ENCODE measurements at regions of chr3 and their contacts with region 1.

Region 1: GRCh38 chr3:136196401-136197158 is 445 bp upstream of the MSL2 start:
- DNase-seq: peak; percentile 100
- ATAC-seq: peak; percentile 79
- H3K4me3 ChIP-seq: peak overlapping the region; percentile 97
- H3K27ac ChIP-seq: peak overlapping the region; percentile 81
- H3K4me1 ChIP-seq: peaks cover 3% of the 10 kb centered on the region; the same call in 1 of the 2 replicates
- H3K27me3 ChIP-seq: no peaks in the 10 kb centered on the region
- CTCF ChIP-seq: no peak
- POLR2A ChIP-seq: peak; percentile 88
- RAD21 ChIP-seq: peak; percentile 9; the same call in 1 of the 2 replicates

Region 2: DNA sequence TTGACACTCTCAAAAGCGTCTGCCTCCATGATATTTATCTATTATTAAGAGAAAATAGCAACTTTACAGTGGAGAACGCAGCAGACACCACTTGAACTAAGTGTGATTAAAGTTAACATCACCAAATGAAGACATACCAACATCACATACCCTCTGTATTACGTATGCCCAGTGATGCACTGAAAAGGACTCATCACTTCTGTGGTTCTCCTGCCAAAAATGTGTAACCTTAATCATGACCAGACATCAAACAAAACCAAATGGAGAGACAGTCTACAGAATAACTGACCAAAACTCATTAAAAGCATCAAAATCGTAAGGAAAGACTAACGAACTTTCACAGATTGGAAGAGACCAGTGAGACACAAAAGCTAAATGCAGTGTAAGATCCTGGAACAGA is 127.9 kb before region 1 on chr3:
- CTCF ChIA-PET with region 1: no interaction called
- POLR2A ChIA-PET with region 1: no interaction called
- dilution Hi-C with region 1: no loop called
- in situ Hi-C with region 1: no loop called
- intact Hi-C with region 1: no loop called
- DNase-seq: peak; percentile 88
- ATAC-seq: peak; percentile 36
- H3K4me3 ChIP-seq: no peak overlapping the region
- H3K27ac ChIP-seq: no peak overlapping the region
- H3K4me1 ChIP-seq: peaks cover 8% of the 10 kb centered on the region
- H3K27me3 ChIP-seq: no peaks in the 10 kb centered on the region
- CTCF ChIP-seq: no peak
- POLR2A ChIP-seq: no peak
- RAD21 ChIP-seq: no peak

Region 3: DNA sequence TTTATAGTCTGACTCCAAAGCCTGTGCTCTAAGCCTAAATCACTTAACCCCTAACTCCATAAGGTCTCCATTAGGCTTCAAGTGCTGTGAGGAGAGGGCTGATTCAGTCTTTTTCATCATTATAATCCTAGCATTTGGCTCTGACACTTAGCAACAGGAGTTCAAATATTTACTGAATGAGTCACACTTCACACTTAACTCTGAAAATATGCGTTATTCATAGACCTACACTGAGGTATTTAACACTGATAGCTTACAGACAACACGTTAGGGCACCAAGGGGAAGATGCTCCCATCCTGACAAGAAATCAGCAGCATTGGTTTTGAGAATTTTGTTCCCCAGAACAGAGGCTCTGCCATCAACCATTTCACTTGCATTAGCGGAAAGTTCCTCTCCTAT is 54.0 kb before region 1 on chr3:
- CTCF ChIA-PET with region 1: no interaction called
- POLR2A ChIA-PET with region 1: no interaction called
- dilution Hi-C with region 1: no loop called
- in situ Hi-C with region 1: no loop called
- intact Hi-C with region 1: loop called (anchors 2 kb)
- DNase-seq: peak; percentile 86
- ATAC-seq: peak; percentile 85
- H3K4me3 ChIP-seq: no peak overlapping the region
- H3K27ac ChIP-seq: peak overlapping the region; percentile 29; the same call in 1 of the 2 replicates
- H3K4me1 ChIP-seq: peaks cover 9% of the 10 kb centered on the region
- H3K27me3 ChIP-seq: no peaks in the 10 kb centered on the region
- CTCF ChIP-seq: no peak
- POLR2A ChIP-seq: no peak
- RAD21 ChIP-seq: no peak

Region 4: DNA sequence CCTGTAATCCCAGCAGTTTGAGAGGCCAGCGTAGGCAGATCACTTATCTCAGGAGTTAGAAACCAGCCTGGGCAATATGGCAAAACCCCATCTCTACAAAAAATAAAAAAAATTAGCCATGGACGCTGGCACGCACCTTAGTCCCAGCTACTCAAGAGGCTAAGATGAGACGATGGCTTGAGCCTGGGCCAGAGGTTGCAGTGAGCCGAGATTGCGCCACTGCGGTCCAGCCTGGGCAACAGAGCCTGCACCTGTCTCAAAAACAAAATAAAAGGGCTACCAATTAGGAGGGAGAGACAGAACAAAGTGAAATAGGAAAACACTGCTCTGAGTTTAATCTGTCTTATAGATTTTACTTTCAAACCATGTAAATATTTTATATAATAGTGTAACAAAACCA is 34.3 kb before region 1 on chr3:
- CTCF ChIA-PET with region 1: interaction called, 4 read pairs
- POLR2A ChIA-PET with region 1: interaction called, 10 read pairs
- dilution Hi-C with region 1: no loop called
- in situ Hi-C with region 1: no loop called
- intact Hi-C with region 1: no loop called
- DNase-seq: no peak
- ATAC-seq: no peak
- H3K4me3 ChIP-seq: no peak overlapping the region
- H3K27ac ChIP-seq: no peak overlapping the region
- H3K4me1 ChIP-seq: no peaks in the 10 kb centered on the region; the same call in 1 of the 2 replicates
- H3K27me3 ChIP-seq: no peaks in the 10 kb centered on the region
- CTCF ChIP-seq: no peak
- POLR2A ChIP-seq: no peak
- RAD21 ChIP-seq: no peak

Region 5: DNA sequence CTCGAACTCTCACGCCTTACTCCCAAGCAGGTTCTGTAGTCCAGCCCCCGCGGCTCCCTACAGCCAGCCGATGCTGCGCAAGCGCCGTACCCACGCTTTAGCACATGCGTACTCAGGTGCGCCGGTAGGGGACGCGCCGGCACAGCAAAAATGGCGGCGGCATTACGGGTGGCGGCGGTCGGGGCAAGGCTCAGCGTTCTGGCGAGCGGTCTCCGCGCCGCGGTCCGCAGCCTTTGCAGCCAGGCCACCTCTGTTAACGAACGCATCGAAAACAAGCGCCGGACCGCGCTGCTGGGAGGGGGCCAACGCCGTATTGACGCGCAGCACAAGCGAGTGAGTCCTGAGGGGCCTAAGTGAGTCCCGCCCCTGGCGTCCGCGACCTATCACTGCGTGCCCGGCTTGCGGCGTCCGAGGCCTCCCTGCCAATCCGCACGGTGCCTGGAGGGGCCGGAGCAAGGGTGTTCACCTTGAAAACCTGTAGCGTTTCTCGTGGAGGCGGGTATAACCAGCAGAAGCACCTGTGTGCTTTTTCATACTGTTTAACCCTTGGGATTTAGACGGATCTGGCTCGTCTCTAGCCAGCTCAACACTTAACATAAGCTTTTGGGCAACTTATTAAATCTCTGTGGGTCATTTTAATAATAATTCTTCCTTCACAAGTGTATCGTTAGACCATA is 53.8 kb after region 1 on chr3 and contains the start of gene PCCB:
- CTCF ChIA-PET with region 1: interaction called, 3 read pairs
- POLR2A ChIA-PET with region 1: no interaction called
- dilution Hi-C with region 1: no loop called
- in situ Hi-C with region 1: no loop called
- intact Hi-C with region 1: loop called (anchors 1 kb)
- DNase-seq: peak; percentile 93
- ATAC-seq: peak; percentile 100
- H3K4me3 ChIP-seq: peak within 1 kb of the TSS; percentile 85
- H3K27ac ChIP-seq: peak within 1 kb of the TSS; percentile 81
- H3K4me1 ChIP-seq: peaks cover 4% of the 10 kb centered on the region; the same call in 1 of the 2 replicates
- H3K27me3 ChIP-seq: no peaks in the 10 kb centered on the region
- CTCF ChIP-seq: peak; percentile 65
- POLR2A ChIP-seq: peak; percentile 61
- RAD21 ChIP-seq: peak; percentile 42
- total RNA-seq, gene PCCB: 63.6 and 76.2 TPM in 2 replicates